Esophagus muscularis mucosa (tissue), 4 donors: ENCODE measurements at regions of chr2 and their contacts with region 1.

Region 1: DNA sequence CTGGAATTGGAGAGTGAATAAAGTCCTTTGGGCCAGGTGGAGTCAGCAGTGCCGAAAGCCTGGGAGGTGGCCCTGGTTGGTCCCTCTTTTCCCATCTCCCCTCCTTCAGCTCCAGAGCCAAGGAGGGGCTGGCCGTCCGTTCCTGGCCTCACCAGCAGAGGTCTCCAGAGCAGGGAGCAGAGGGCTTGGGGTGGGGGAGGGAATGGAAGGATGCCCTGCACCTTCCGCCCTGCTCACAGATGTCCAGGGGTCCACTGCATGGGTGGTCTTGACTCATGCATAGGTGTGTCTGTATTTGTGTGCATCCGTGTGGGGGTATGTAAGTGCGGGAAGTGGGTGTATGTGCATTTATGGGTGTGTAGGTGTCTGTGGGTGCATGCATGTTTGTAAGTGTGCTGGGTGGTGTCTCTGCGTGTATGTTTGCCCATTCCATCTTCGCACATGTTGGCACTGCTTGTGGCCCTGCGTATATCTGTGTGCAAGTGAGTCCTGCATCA is 201.8 kb downstream of the ZFP36L2 start:
- DNase-seq: no peak
- H3K4me3 ChIP-seq: no peak overlapping the region
- H3K27ac ChIP-seq: peak overlapping the region in 1 of 4 donors; percentile 55
- H3K4me1 ChIP-seq: peaks cover 19 to 36% (median 28%) of the 10 kb centered on the region in 4 donors
- H3K27me3 ChIP-seq: no peaks in the 10 kb centered on the region
- CTCF ChIP-seq: peak; percentile 91 to 93 (median 93)
- EP300 ChIP-seq: no peak
- POLR2A ChIP-seq: no peak

Region 2: GRCh38 chr2:42810121-42810970 is 214.2 kb before region 1 on chr2:
- intact Hi-C with region 1: no loop called
- DNase-seq: peak; percentile 99
- H3K4me3 ChIP-seq: peak overlapping the region; percentile 68 to 88 (median 76)
- H3K27ac ChIP-seq: peak overlapping the region; percentile 98 to 100 (median 99)
- H3K4me1 ChIP-seq: peaks cover 13 to 25% (median 24%) of the 10 kb centered on the region in 4 donors
- H3K27me3 ChIP-seq: no peaks in the 10 kb centered on the region
- CTCF ChIP-seq: no peak
- EP300 ChIP-seq: no peak
- POLR2A ChIP-seq: peak; percentile 44

Region 3: GRCh38 chr2:42987112-42987922 is 37.2 kb before region 1 on chr2:
- intact Hi-C with region 1: no loop called
- DNase-seq: no peak
- H3K4me3 ChIP-seq: no peak overlapping the region
- H3K27ac ChIP-seq: no peak overlapping the region
- H3K4me1 ChIP-seq: no peaks in the 10 kb centered on the region
- H3K27me3 ChIP-seq: no peaks in the 10 kb centered on the region
- CTCF ChIP-seq: no peak
- EP300 ChIP-seq: no peak
- POLR2A ChIP-seq: no peak

Region 4: DNA sequence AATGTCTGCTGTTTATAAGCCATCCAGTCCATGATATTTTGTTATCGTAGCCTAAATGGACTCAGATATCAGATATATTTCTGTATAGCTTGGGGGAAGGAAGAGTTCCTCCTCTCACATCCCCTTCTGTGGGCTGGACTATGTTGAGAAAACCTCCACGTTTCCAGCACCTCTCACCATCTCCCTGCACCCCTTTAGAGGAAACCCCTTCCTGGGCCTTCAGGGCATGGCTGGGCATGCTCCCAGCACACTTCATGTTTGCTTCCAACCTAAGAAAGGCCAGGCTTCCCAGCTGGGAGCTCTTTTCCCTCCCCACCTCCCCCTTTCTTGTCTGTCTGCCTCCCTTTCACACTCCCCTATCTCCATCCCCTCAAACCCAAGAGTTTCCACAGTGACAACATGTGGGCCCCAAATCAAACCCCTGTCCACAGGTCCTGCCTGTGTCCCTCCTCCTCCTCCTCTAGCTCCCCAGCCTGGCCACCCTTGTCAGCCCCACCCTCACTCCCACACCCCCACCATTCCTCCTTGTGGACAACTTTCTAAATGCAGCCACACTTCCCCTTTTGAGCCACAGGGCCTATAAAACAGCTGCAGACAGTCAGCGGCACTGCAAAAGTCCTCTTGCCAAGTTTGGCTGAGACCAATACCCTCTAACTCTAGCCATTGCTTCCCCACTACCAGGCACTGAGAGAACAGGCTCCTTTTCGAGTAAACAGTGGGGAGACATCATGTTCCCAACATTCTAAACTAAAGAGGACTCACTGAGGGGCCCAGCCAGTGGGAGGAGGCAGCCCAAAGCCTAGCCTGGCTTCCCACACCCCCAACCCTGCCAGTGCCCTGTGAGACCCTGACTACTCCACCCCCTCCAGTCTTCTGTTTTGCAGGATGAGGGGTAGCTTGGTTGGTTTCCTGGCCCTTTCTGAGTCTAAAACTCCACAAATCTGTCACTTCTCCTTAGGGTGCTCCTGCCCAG is 81.3 kb after region 1 on chr2:
- intact Hi-C with region 1: loop called (anchors 10 kb)
- DNase-seq: no peak
- H3K4me3 ChIP-seq: no peak overlapping the region
- H3K27ac ChIP-seq: peak overlapping the region; percentile 75 to 85 (median 82)
- H3K4me1 ChIP-seq: peaks cover 64 to 88% (median 77%) of the 10 kb centered on the region in 4 donors
- H3K27me3 ChIP-seq: no peaks in the 10 kb centered on the region
- CTCF ChIP-seq: peak in 2 of 3 experiments; percentile 28 to 48
- EP300 ChIP-seq: peak; percentile 19
- POLR2A ChIP-seq: no peak